ENCODE measurements at regions of chr1 and their contacts with region 1.

Region 1: GRCh38 chr1:40722636-40723035 is 31.1 kb downstream of the NFYC start:
- DNase-seq: no peak
- H3K4me3 ChIP-seq: no peak overlapping the region
- H3K27ac ChIP-seq: no peak overlapping the region
- H3K4me1 ChIP-seq: peaks cover 4% of the 10 kb centered on the region
- H3K27me3 ChIP-seq: no peaks in the 10 kb centered on the region
- CTCF ChIP-seq: peak in 1 of 2 donors; percentile 18

Region 2: DNA sequence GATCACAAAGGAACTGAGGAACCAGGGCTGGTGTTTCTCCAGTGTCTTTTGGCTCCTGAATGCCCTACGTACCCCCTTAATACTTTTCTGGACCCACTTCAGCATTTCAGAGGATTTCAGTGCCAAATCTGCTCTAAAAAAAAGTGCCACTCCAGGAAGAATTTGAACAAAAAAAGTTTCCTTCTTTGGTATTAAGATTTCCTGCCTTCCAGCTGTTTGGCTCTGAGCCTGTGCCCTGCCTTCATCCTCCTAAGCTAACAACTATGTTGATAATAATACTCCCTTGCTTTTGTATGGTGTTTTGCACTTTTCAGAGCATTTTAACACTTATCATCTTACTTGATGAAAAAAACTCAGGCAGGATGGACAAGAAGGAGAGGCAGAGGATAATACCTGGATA is 46.1 kb before region 1 on chr1:
- CTCF ChIA-PET with region 1: no interaction called
- dilution Hi-C with region 1: loop called (anchors 5 kb)
- in situ Hi-C with region 1: no loop called
- intact Hi-C with region 1: no loop called
- DNase-seq: no peak
- H3K4me3 ChIP-seq: no peak overlapping the region
- H3K27ac ChIP-seq: no peak overlapping the region
- H3K4me1 ChIP-seq: no peaks in the 10 kb centered on the region
- H3K27me3 ChIP-seq: no peaks in the 10 kb centered on the region
- CTCF ChIP-seq: no peak